BJ (cell line): ENCODE measurements at regions of chr4 and their contacts with region 1.

Region 1: DNA sequence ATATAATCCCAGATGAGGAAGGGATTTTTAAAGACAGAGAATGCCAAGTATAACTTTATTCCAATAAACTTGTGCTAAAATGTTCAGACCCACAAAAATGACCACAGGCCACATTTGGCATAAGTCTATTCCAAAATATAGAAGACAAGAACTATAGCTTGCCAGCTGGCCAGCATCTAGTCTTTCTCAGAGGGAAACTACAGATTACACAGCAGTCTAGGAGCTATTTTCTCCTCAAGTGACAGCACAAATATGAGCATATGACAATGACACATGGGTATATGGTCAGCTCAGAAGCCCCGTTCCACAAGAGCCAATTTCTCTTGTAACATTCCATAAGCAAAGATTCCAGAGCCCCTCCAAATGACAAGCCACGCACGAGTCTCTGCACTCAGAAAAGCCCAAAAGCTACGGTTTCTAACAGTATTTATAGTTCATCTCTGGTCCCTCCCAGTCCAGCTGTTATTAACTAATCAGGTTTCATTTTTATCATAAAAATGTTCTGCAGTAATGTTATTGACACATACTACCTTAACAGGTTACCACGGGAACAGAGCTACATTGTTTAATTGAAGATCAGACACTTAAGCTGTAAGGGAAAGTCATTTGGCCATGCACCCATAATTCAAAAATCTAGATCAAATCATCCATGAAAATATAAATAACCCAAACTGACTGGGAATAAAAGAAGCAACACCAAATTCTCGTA is 70.3 kb downstream of the RAB28 start:
- DNase-seq: no peak
- H3K4me3 ChIP-seq: no peak overlapping the region
- H3K27me3 ChIP-seq: no peaks in the 10 kb centered on the region
- CTCF ChIP-seq: no peak

Region 2: DNA sequence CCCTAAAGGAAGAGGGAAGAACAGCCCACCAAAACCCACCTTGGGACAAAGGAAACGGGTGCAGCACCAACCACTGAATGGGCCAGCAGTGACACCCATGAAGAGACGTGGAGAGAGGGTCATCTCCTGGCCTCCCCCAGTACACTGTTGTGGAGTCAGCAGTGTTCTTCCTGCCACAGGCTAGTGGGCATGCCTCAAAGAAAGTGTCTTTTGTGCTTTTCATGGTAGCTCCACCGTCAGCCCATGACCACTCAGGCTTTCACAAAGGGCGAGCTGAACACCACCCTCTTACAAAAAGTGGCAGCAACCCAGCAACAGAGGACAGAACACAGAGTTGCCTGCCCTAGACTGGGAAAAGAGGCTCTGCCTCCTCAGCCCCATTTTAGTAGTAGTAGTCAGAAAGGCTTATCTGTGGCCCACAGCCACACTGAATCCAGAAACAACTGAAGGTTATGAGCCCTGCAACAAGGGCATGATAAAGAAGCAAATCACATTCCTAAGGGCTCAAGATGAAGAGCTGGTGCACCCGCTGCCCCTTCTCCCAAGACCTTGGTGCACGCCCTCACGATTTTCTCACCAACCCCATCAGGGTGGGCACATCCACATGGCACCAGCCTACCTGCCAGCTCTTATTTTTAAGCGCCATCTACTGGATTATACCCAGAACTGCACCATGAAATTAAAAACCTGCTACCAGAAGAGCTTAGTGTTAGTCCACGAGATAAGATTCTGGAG is 17.1 kb after region 1 on chr4:
- CTCF ChIA-PET with region 1: interaction called, 12 read pairs
- POLR2A ChIA-PET with region 1: no interaction called
- DNase-seq: no peak
- H3K4me3 ChIP-seq: no peak overlapping the region
- H3K27me3 ChIP-seq: no peaks in the 10 kb centered on the region
- CTCF ChIP-seq: no peak